ENCODE measurements at regions of chr1 and their contacts with region 1.

Region 1: GRCh38 chr1:186363891-186364290 is 11.2 kb downstream of the TPR start:
- DNase-seq: no peak
- ATAC-seq: no peak
- H3K4me3 ChIP-seq: no peak overlapping the region
- H3K4me3 Mint-ChIP-seq: no peak overlapping the region
- H3K27ac ChIP-seq: no peak overlapping the region
- H3K27ac Mint-ChIP-seq: no peak overlapping the region
- H3K4me1 ChIP-seq: no peaks in the 10 kb centered on the region
- H3K4me1 Mint-ChIP-seq: peaks cover 15% of the 10 kb centered on the region
- H3K27me3 ChIP-seq: no peaks in the 10 kb centered on the region
- H3K27me3 Mint-ChIP-seq: no peaks in the 10 kb centered on the region
- CTCF ChIP-seq: no peak

Region 2: GRCh38 chr1:184716158-184716557 is 1647.7 kb before region 1 on chr1:
- CTCF ChIA-PET with region 1: no interaction called
- POLR2A ChIA-PET with region 1: interaction called, 3 read pairs
- intact Hi-C with region 1: loop called in 1 of 2 experiments (anchors 10 kb)
- DNase-seq: no peak
- ATAC-seq: no peak
- H3K4me3 ChIP-seq: no peak overlapping the region
- H3K4me3 Mint-ChIP-seq: no peak overlapping the region
- H3K27ac ChIP-seq: no peak overlapping the region
- H3K27ac Mint-ChIP-seq: no peak overlapping the region
- H3K4me1 ChIP-seq: no peaks in the 10 kb centered on the region
- H3K4me1 Mint-ChIP-seq: no peaks in the 10 kb centered on the region
- H3K27me3 ChIP-seq: no peaks in the 10 kb centered on the region
- H3K27me3 Mint-ChIP-seq: no peaks in the 10 kb centered on the region
- CTCF ChIP-seq: no peak

Region 3: DNA sequence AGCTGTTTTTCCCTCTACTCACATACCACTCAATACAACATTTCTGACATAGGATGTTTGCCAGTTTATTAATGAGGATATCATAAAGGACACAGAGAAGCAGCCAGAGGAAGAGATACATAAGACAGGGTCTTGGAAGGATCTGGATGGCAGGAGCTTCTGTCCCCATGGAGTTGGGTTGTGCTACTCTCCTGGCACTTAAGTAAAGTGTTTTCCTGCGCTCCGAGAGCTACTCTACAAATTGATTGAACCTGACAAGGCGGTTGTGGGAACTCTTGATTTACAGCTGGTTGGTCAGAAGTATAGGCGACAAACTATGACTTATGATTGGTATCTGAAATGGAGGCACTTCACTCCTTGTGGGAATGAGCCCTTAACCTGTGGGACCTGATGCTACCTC is 420.9 kb before region 1 on chr1:
- CTCF ChIA-PET with region 1: no interaction called
- POLR2A ChIA-PET with region 1: no interaction called
- intact Hi-C with region 1: no loop called
- DNase-seq: no peak
- ATAC-seq: no peak
- H3K4me3 ChIP-seq: no peak overlapping the region
- H3K4me3 Mint-ChIP-seq: no peak overlapping the region
- H3K27ac ChIP-seq: no peak overlapping the region
- H3K27ac Mint-ChIP-seq: no peak overlapping the region
- H3K4me1 ChIP-seq: no peaks in the 10 kb centered on the region
- H3K4me1 Mint-ChIP-seq: no peaks in the 10 kb centered on the region
- H3K27me3 ChIP-seq: no peaks in the 10 kb centered on the region
- H3K27me3 Mint-ChIP-seq: peaks cover 4% of the 10 kb centered on the region
- CTCF ChIP-seq: no peak

Region 4: GRCh38 chr1:186386725-186387383 is 23.0 kb after region 1 on chr1:
- CTCF ChIA-PET with region 1: interaction called, 3 read pairs
- POLR2A ChIA-PET with region 1: no interaction called
- intact Hi-C with region 1: loop called in 1 of 2 experiments (anchors 2 kb)
- DNase-seq: no peak
- ATAC-seq: no peak
- H3K4me3 ChIP-seq: no peak overlapping the region
- H3K4me3 Mint-ChIP-seq: no peak overlapping the region
- H3K27ac ChIP-seq: no peak overlapping the region
- H3K27ac Mint-ChIP-seq: no peak overlapping the region
- H3K4me1 ChIP-seq: no peaks in the 10 kb centered on the region
- H3K4me1 Mint-ChIP-seq: no peaks in the 10 kb centered on the region
- H3K27me3 ChIP-seq: no peaks in the 10 kb centered on the region
- H3K27me3 Mint-ChIP-seq: no peaks in the 10 kb centered on the region
- CTCF ChIP-seq: no peak

Region 5: GRCh38 chr1:186550832-186551231 is 186.9 kb after region 1 on chr1:
- CTCF ChIA-PET with region 1: no interaction called
- POLR2A ChIA-PET with region 1: no interaction called
- intact Hi-C with region 1: no loop called
- DNase-seq: no peak
- ATAC-seq: no peak
- H3K4me3 ChIP-seq: no peak overlapping the region
- H3K4me3 Mint-ChIP-seq: no peak overlapping the region
- H3K27ac ChIP-seq: no peak overlapping the region
- H3K27ac Mint-ChIP-seq: no peak overlapping the region
- H3K4me1 ChIP-seq: no peaks in the 10 kb centered on the region
- H3K4me1 Mint-ChIP-seq: no peaks in the 10 kb centered on the region
- H3K27me3 ChIP-seq: peaks cover 0 to 3% of the 10 kb centered on the region in 2 experiments
- H3K27me3 Mint-ChIP-seq: peaks cover 10% of the 10 kb centered on the region
- CTCF ChIP-seq: no peak